ENCODE measurements at regions of chr9 and their contacts with region 1.

Region 1: GRCh38 chr9:83980395-83981125 is at the start of gene RMI1:
- DNase-seq: peak; percentile 98 to 100 (median 99)
- ATAC-seq: peak; percentile 77
- H3K4me3 ChIP-seq: peak within 1 kb of the TSS; percentile 100
- H3K4me3 Mint-ChIP-seq: peak within 1 kb of the TSS; percentile 100
- H3K27ac ChIP-seq: peak within 1 kb of the TSS; percentile 98 to 100
- H3K27ac Mint-ChIP-seq: peak within 1 kb of the TSS; percentile 100
- H3K4me1 ChIP-seq: peaks cover 10% of the 10 kb centered on the region
- H3K4me1 Mint-ChIP-seq: peaks cover 51% of the 10 kb centered on the region
- H3K27me3 ChIP-seq: no peaks in the 10 kb centered on the region
- H3K27me3 Mint-ChIP-seq: no peaks in the 10 kb centered on the region
- CTCF ChIP-seq: no peak
- total RNA-seq, gene RMI1: 0.66 to 1.2 TPM

Region 2: GRCh38 chr9:83707768-83708514 is 272.6 kb before region 1 on chr9 and contains the start of gene UBQLN1:
- CTCF ChIA-PET with region 1: no interaction called
- POLR2A ChIA-PET with region 1: interaction called, 61 read pairs
- intact Hi-C with region 1: loop called (anchors 2 to 10 kb)
- DNase-seq: peak; percentile 85 to 97 (median 89)
- ATAC-seq: peak; percentile 86
- H3K4me3 ChIP-seq: peak within 1 kb of the TSS; percentile 92
- H3K4me3 Mint-ChIP-seq: peak within 1 kb of the TSS; percentile 90
- H3K27ac ChIP-seq: peak within 1 kb of the TSS; percentile 96 to 98
- H3K27ac Mint-ChIP-seq: peak within 1 kb of the TSS; percentile 94
- H3K4me1 ChIP-seq: peaks cover 14% of the 10 kb centered on the region
- H3K4me1 Mint-ChIP-seq: peaks cover 53% of the 10 kb centered on the region
- H3K27me3 ChIP-seq: no peaks in the 10 kb centered on the region
- H3K27me3 Mint-ChIP-seq: no peaks in the 10 kb centered on the region
- CTCF ChIP-seq: no peak
- total RNA-seq, gene UBQLN1: 178 to 185 TPM

Region 3: DNA sequence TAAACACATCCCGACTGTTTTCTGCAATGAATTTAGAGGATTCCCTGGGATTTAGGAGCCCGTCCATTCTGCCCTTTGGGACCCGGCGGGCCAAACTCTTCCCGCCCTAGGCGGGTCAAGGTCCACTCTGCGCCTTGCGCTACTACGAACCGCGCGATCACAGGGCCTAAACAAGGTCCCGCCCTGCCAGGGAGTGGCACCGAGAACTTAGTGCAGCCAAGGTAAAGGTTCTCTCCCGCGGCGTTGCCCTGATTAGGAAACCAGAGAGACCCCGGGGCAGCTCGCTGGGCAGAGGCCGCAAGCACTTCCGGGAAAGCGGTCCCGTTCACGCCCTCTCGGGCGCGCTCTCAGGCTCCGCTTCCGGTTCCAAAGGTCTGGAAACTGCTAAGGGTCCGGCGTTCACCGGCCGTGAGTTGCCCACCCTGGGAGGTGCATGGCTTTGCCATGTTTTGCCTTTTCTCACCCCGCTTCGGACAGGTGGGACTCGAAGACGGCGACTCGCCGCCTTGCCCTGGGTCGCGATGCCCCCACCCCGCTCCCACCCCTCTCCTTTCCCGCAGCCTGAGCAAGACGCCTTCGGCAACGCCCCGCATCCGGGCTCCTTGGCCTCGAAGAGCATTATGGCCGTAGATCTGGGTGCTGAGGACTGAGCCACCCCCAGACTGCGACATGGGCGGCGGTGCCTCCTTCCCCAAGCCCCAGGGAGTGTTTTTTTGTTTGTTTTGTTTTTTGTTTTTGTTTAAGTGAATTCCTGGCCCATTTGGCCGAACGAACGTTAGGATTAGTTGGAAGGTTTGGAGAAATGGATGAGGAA is 23.9 kb before region 1 on chr9:
- CTCF ChIA-PET with region 1: no interaction called
- POLR2A ChIA-PET with region 1: interaction called, 77 read pairs
- intact Hi-C with region 1: loop called (anchors 2 kb)
- DNase-seq: peak; percentile 12 to 75 (median 44)
- ATAC-seq: peak; percentile 78
- H3K4me3 ChIP-seq: peak overlapping the region; percentile 84
- H3K4me3 Mint-ChIP-seq: peak overlapping the region; percentile 98
- H3K27ac ChIP-seq: peak overlapping the region; percentile 65 to 82
- H3K27ac Mint-ChIP-seq: peak overlapping the region; percentile 93
- H3K4me1 ChIP-seq: peaks cover 20% of the 10 kb centered on the region
- H3K4me1 Mint-ChIP-seq: peaks cover 23% of the 10 kb centered on the region
- H3K27me3 ChIP-seq: no peaks in the 10 kb centered on the region
- H3K27me3 Mint-ChIP-seq: no peaks in the 10 kb centered on the region
- CTCF ChIP-seq: no peak

Region 4: DNA sequence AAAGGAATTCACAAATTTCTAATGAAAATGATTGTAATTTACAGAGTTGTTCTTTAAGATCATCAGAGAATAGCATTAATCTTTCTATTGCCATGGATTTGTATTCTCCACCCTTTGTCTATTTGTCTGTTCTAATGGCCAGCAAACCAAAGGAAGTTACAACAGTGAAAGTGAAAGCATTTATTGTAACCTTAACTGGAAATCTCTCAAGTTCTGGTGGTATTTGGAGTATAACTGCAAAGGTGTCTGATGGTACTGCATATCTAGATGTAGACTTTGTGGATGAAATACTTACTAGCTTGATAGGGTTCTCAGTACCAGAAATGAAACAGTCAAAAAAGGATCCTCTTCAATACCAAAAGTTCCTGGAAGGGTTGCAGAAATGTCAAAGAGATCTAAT is 21.8 kb after region 1 on chr9:
- CTCF ChIA-PET with region 1: no interaction called
- POLR2A ChIA-PET with region 1: interaction called, 12 read pairs
- intact Hi-C with region 1: no loop called
- DNase-seq: peak in 2 of 14 experiments; percentile 11 to 54
- ATAC-seq: no peak
- H3K4me3 ChIP-seq: no peak overlapping the region
- H3K4me3 Mint-ChIP-seq: no peak overlapping the region
- H3K27ac ChIP-seq: no peak overlapping the region
- H3K27ac Mint-ChIP-seq: no peak overlapping the region
- H3K4me1 ChIP-seq: no peaks in the 10 kb centered on the region
- H3K4me1 Mint-ChIP-seq: peaks cover 17% of the 10 kb centered on the region
- H3K27me3 ChIP-seq: no peaks in the 10 kb centered on the region
- H3K27me3 Mint-ChIP-seq: no peaks in the 10 kb centered on the region
- CTCF ChIP-seq: no peak

Region 5: GRCh38 chr9:85741875-85742629 is 1761.5 kb after region 1 on chr9 and contains the start of gene AGTPBP1:
- CTCF ChIA-PET with region 1: no interaction called
- POLR2A ChIA-PET with region 1: interaction called, 9 read pairs
- intact Hi-C with region 1: loop called in 1 of 2 experiments (anchors 10 kb)
- DNase-seq: peak; percentile 92 to 100 (median 98)
- ATAC-seq: peak; percentile 81
- H3K4me3 ChIP-seq: peak within 1 kb of the TSS; percentile 89
- H3K4me3 Mint-ChIP-seq: peak within 1 kb of the TSS; percentile 97
- H3K27ac ChIP-seq: peak within 1 kb of the TSS; percentile 80 to 97
- H3K27ac Mint-ChIP-seq: peak within 1 kb of the TSS; percentile 93
- H3K4me1 ChIP-seq: peaks cover 18% of the 10 kb centered on the region
- H3K4me1 Mint-ChIP-seq: peaks cover 35% of the 10 kb centered on the region
- H3K27me3 ChIP-seq: no peaks in the 10 kb centered on the region
- H3K27me3 Mint-ChIP-seq: no peaks in the 10 kb centered on the region
- CTCF ChIP-seq: no peak
- total RNA-seq, gene AGTPBP1: 52.0 to 55.2 TPM